CD4-positive, alpha-beta memory T cell (primary cell): ENCODE measurements at regions of chr19 and their contacts with region 1.

Region 1: DNA sequence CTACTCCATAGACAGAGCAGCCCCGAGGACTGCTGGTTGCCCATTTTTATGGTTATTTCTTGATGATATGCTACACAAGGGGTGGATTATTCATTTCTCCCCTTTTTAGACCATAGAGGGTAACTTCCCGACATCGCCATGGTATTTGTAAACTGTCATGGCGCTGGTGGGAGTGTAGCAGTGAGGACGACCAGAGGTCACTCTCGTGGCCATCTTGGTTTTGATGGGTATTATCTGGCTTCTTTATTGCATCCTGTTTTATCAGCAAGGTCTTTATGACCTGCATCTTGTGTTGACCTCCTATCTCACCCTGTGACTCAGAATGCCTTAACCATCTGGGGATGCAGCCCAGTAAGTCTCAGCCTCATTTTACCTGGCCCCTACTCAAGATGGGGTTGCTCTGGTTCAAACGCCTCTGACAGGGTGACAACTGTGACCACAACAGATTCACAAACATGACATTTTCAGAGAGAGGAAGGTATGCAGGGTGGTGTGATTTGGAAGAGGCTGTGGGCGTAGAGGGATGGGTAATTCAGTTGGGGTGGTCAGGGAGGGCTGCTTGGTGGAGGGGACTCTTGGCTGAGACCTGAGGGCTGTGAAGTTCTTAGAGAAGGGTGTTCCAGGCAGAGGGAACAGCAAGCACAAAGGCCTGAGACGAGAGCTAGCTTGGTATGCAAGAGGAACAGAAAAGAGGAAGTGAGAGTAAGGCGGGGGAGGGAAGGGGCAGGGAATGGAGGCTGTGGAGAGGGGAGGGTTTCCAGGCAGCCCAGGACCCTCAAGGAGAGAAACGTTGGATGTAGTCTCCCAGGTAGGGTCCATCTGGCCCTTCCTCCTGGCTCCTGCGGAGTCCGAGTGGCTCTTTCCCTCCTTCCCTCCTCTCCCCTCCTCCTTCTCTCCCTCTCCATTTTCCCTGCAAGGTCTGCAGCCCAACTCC is 23.5 kb downstream of the FAM187B start:
- DNase-seq: no peak
- H3K4me3 ChIP-seq: no peak overlapping the region
- H3K4me3 Mint-ChIP-seq: peak overlapping the region in 7 of 8 donors; percentile 47 to 85 (median 63)
- H3K27ac ChIP-seq: peak overlapping the region; percentile 75
- H3K27ac Mint-ChIP-seq: peak overlapping the region; percentile 93 to 100 (median 99)
- H3K4me1 ChIP-seq: peaks cover 74% of the 10 kb centered on the region
- H3K4me1 Mint-ChIP-seq: peaks cover 53 to 92% (median 63%) of the 10 kb centered on the region in 4 donors
- H3K27me3 ChIP-seq: no peaks in the 10 kb centered on the region
- H3K27me3 Mint-ChIP-seq: no peaks in the 10 kb centered on the region

Region 2: DNA sequence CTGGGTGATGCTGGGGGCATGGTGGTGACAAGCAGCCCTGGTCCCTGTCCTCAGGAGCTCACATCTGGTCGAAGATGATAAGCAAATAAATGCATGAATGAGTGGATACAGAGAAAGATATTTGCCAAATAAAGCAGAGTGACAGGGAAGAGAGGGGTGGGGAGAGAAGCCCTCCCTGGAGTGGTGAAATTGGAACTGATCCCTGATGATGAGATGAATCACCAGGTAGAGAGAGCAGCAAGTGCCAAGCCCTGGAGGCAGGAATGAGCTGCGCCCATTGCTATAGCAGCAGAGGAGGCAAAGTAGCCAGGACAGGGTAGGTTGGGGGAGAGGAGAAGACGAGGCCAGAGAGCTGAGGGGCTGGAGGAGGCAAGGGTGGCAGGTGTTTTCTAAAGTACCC is 36.9 kb before region 1 on chr19:
- CTCF ChIA-PET with region 1: interaction called, 4 read pairs
- POLR2A ChIA-PET with region 1: interaction called, 105 read pairs
- intact Hi-C with region 1: loop called (anchors 5 kb)
- DNase-seq: no peak
- H3K4me3 ChIP-seq: no peak overlapping the region
- H3K4me3 Mint-ChIP-seq: peak overlapping the region in 4 of 8 donors; percentile 20 to 60 (median 48)
- H3K27ac ChIP-seq: peak overlapping the region; percentile 3
- H3K27ac Mint-ChIP-seq: peak overlapping the region; percentile 82 to 95 (median 91)
- H3K4me1 ChIP-seq: peaks cover 67% of the 10 kb centered on the region
- H3K4me1 Mint-ChIP-seq: peaks cover 31 to 80% (median 58%) of the 10 kb centered on the region in 4 donors
- H3K27me3 ChIP-seq: no peaks in the 10 kb centered on the region
- H3K27me3 Mint-ChIP-seq: no peaks in the 10 kb centered on the region

Region 3: GRCh38 chr19:35236638-35237400 is 31.8 kb after region 1 on chr19:
- CTCF ChIA-PET with region 1: interaction called, 3 read pairs
- POLR2A ChIA-PET with region 1: interaction called, 217 read pairs
- intact Hi-C with region 1: no loop called
- DNase-seq: peak in 3 of 5 donors; percentile 34 to 38 (median 36)
- H3K4me3 ChIP-seq: no peak overlapping the region
- H3K4me3 Mint-ChIP-seq: no peak overlapping the region
- H3K27ac ChIP-seq: no peak overlapping the region
- H3K27ac Mint-ChIP-seq: peak overlapping the region in 5 of 7 donors; percentile 30 to 93 (median 59)
- H3K4me1 ChIP-seq: peaks cover 34% of the 10 kb centered on the region
- H3K4me1 Mint-ChIP-seq: peaks cover 20 to 42% (median 37%) of the 10 kb centered on the region in 4 donors
- H3K27me3 ChIP-seq: no peaks in the 10 kb centered on the region
- H3K27me3 Mint-ChIP-seq: no peaks in the 10 kb centered on the region